Activated naive CD8-positive, alpha-beta T cell treated with anti-CD3 and anti-CD28 coated beads, Interleukin-2, amount 10 ng/mL, durations not matched to agents 7 days and 5 days (primary cell): ENCODE measurements at regions of chr5 and their contacts with region 1.

Region 1: GRCh38 chr5:36151434-36152323 is at the starts of genes LMBRD2 and SKP2:
- DNase-seq: peak; percentile 95
- ATAC-seq: peak; percentile 99
- H3K4me3 Mint-ChIP-seq: peak within 1 kb of the TSS; percentile 96
- H3K27ac Mint-ChIP-seq: peak within 1 kb of the TSS; percentile 94
- H3K4me1 Mint-ChIP-seq: peaks cover 51% of the 10 kb centered on the region
- H3K27me3 Mint-ChIP-seq: no peaks in the 10 kb centered on the region
- total RNA-seq, gene LMBRD2: 13.8 to 14.4 TPM
- total RNA-seq, gene SKP2: 40.8 to 49.2 TPM

Region 2: DNA sequence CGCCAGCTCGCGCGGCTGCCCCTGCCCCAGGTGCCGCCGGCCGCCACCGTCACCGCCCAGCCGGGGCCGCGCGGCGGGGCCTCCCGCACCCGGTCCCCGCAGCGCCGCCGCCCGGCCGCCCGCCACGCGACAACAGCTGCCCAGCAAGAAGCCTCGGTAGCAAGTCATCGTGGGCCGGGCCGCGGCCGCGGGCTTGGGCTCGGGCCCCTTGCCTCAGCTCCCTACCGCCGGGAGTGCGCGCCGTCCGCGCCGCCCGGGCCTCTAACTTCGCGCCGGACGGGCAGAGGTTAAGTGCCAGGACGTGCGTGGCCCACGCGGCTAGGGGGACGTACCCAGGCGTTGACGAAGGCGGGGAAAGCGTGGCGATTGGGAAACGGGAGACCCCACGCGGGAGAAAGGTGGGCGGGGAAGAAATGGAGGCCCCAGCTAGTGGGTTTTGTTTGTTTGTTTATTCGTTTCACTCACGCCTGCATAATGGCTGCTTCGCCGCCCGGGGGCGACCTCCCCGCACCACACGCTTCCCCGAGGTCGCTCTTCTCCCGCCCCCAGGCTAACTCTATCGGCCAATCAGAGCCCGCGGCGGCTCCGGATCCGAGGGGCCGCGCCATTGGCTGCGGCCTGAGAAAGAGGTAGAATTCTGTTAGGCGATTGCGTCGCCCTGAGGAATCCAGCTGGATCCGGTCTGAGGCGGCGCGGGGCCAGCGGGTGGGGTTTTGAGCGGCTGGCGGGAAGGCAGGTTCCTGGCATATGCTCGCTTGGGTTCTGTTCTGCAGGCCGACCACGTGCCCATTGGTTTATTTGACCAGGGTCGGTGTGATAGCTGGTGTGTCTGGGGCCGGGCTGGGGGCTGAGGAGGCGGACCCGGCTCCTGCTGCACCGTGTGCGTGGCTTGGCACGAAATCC is 90.2 kb after region 1 on chr5 and contains the start of gene NADK2:
- POLR2A ChIA-PET with region 1: interaction called, 36 read pairs
- DNase-seq: peak; percentile 91
- ATAC-seq: peak; percentile 93
- H3K4me3 Mint-ChIP-seq: peak within 1 kb of the TSS; percentile 86
- H3K27ac Mint-ChIP-seq: peak within 1 kb of the TSS; percentile 93
- H3K4me1 Mint-ChIP-seq: peaks cover 18% of the 10 kb centered on the region
- H3K27me3 Mint-ChIP-seq: no peaks in the 10 kb centered on the region
- total RNA-seq, gene NADK2: 16.5 to 17.3 TPM

Region 3: GRCh38 chr5:36422952-36423351 is 271.3 kb after region 1 on chr5:
- POLR2A ChIA-PET with region 1: no interaction called
- DNase-seq: no peak
- ATAC-seq: no peak
- H3K4me3 Mint-ChIP-seq: peak overlapping the region; percentile 51
- H3K27ac Mint-ChIP-seq: no peak overlapping the region
- H3K4me1 Mint-ChIP-seq: peaks cover 23% of the 10 kb centered on the region
- H3K27me3 Mint-ChIP-seq: peaks cover 3% of the 10 kb centered on the region